Esophagus muscularis mucosa (tissue), 4 donors: ENCODE measurements at regions of chr7 and their contacts with region 1.

Region 1: GRCh38 chr7:73557108-73557396 is 438 bp downstream of the BCL7B start:
- DNase-seq: peak; percentile 98
- H3K4me3 ChIP-seq: peak overlapping the region; percentile 85 to 98 (median 88)
- H3K27ac ChIP-seq: peak overlapping the region; percentile 99 to 100 (median 100)
- H3K4me1 ChIP-seq: peaks cover 21 to 41% (median 38%) of the 10 kb centered on the region in 4 donors
- H3K27me3 ChIP-seq: no peaks in the 10 kb centered on the region
- CTCF ChIP-seq: peak in 1 of 3 experiments; percentile 6
- EP300 ChIP-seq: no peak
- POLR2A ChIP-seq: no peak

Region 2: GRCh38 chr7:73522105-73522872 is 34.8 kb before region 1 on chr7 and contains the start of gene BAZ1B:
- intact Hi-C with region 1: loop called (anchors 5 kb)
- DNase-seq: peak; percentile 99
- H3K4me3 ChIP-seq: peak within 1 kb of the TSS; percentile 71 to 95 (median 90)
- H3K27ac ChIP-seq: peak within 1 kb of the TSS; percentile 88 to 96 (median 94)
- H3K4me1 ChIP-seq: peaks cover 29 to 47% (median 46%) of the 10 kb centered on the region in 4 donors
- H3K27me3 ChIP-seq: no peaks in the 10 kb centered on the region
- CTCF ChIP-seq: peak in 1 of 3 experiments; percentile 10
- EP300 ChIP-seq: no peak
- POLR2A ChIP-seq: no peak
- total RNA-seq, gene BAZ1B: 55.3 to 72.2 (median 66.2) TPM

Region 3: DNA sequence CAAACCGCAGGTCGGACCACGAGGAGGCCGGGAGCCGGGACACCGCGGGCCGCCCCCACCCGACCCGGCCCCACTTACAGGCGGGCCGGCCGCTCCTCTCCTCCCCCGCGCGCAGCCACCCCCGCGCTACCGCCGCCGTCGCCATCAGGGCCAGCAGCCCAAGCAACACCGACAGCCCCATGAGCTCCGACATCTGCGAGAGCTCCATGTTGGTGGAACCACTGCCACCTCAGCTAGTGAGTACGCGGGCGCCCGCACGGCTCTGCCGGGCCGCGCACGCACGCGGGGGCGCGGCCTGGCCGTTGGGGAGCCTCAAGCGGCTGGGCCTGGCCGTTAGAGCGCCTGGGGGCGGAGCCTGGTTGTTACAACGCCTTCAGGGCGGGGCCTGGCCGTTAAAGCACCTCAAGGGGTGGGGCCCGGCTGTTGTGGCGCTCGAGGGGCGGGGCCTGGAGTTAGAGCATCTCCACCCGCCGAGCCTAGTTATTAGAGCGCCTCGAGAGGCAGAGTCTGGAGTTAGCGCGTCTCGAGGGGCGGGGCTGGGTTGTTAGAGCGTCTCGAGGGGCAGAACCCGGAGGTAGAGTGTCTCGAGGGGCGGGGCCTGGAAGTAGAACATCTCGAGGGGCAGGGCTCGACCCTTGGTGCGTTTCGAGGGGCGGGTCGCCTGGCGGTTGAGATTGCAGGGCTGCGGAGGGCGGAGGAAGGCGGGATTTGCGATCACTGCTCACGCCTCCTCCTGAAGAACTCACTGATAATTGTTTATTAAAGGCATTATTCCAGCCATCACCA is 21.5 kb after region 1 on chr7 and contains the start of gene TBL2:
- intact Hi-C with region 1: loop called (anchors 2 kb)
- DNase-seq: peak; percentile 99
- H3K4me3 ChIP-seq: peak within 1 kb of the TSS; percentile 85 to 96 (median 93)
- H3K27ac ChIP-seq: peak within 1 kb of the TSS; percentile 92 to 94 (median 92)
- H3K4me1 ChIP-seq: peaks cover 24 to 46% (median 34%) of the 10 kb centered on the region in 4 donors
- H3K27me3 ChIP-seq: no peaks in the 10 kb centered on the region
- CTCF ChIP-seq: peak in 2 of 3 experiments; percentile 9 to 24
- EP300 ChIP-seq: no peak
- POLR2A ChIP-seq: peak; percentile 75
- total RNA-seq, gene TBL2: 19.1 to 52.5 (median 38.2) TPM